CD4-positive, alpha-beta T cell (primary cell): ENCODE measurements at regions of chr4 and their contacts with region 1.

Region 1: DNA sequence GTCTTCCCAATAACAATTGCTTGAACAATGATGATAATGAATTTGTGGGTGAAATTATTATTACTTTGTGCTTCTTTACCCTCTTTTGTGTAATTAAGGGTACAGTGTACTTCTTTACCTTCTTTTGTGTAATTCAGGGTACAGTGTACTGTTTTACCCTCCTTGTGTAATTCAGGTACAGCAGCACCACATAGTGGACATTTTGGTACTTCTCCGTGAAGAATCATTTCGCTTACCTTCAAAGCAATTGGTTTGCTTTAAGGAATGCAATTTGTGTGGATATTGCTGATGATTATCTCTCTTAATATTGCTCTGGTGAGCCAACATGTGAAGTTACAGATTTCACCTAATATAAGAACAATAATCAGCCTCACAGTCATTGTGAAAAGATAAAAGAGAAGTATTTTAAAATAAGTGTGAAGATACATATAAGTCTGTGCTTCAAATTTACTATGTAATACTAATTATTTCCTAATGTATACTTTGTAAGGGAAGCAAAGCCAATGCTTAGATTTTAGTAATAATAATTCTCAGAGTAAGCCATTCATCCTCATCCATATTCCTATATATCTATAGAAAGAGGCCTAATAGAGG is 27.2 kb upstream of the SEC24B start:
- DNase-seq: peak in 7 of 14 experiments; percentile 3 to 72 (median 37)
- ATAC-seq: peak; percentile 65
- H3K4me3 ChIP-seq: no peak overlapping the region
- H3K4me3 Mint-ChIP-seq: no peak overlapping the region
- H3K27ac ChIP-seq: no peak overlapping the region
- H3K27ac Mint-ChIP-seq: no peak overlapping the region
- H3K4me1 ChIP-seq: no peaks in the 10 kb centered on the region
- H3K4me1 Mint-ChIP-seq: no peaks in the 10 kb centered on the region
- H3K27me3 ChIP-seq: peaks cover 0 to 2% of the 10 kb centered on the region in 2 experiments
- H3K27me3 Mint-ChIP-seq: peaks cover 4% of the 10 kb centered on the region
- CTCF ChIP-seq: peak; percentile 77

Region 2: DNA sequence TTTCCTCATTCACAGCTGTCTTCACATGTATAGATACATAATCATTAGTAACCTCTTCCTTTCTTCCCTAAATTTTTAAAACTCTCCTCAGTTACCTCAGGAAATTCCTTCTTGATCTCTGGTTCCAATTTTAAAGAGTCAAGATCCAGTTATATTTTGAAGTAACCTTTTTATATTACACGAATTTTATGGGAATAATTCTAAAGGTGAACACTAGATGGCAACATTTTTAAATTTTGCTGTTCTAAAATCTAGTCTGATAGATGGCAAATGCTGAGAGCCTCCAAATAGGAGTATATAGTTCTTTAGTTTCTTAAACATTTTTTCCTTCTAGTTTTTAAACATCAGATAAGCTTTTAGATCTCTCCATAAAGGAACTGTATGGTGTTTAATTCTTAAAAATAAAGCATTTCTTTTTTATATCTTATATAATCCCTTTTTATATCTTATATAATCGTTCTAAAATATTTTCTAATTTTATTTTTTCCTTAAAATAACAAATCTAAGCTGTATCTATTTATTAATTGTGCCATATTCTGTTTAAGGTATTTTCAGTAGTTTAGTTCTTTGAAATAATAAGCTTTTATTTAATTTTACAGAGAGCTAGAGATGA is 1648.5 kb before region 1 on chr4:
- CTCF ChIA-PET with region 1: no interaction called
- POLR2A ChIA-PET with region 1: no interaction called
- intact Hi-C with region 1: loop called in 1 of 2 experiments (anchors 5 kb)
- DNase-seq: peak in 3 of 14 experiments; percentile 25 to 42 (median 32)
- ATAC-seq: no peak
- H3K4me3 ChIP-seq: no peak overlapping the region
- H3K4me3 Mint-ChIP-seq: no peak overlapping the region
- H3K27ac ChIP-seq: no peak overlapping the region
- H3K27ac Mint-ChIP-seq: no peak overlapping the region
- H3K4me1 ChIP-seq: no peaks in the 10 kb centered on the region
- H3K4me1 Mint-ChIP-seq: no peaks in the 10 kb centered on the region
- H3K27me3 ChIP-seq: peaks cover 0 to 7% of the 10 kb centered on the region in 2 experiments
- H3K27me3 Mint-ChIP-seq: peaks cover 13% of the 10 kb centered on the region
- CTCF ChIP-seq: peak; percentile 80

Region 3: GRCh38 chr4:108683479-108683878 is 723.0 kb before region 1 on chr4:
- CTCF ChIA-PET with region 1: no interaction called
- POLR2A ChIA-PET with region 1: no interaction called
- intact Hi-C with region 1: loop called in 1 of 2 experiments (anchors 5 kb)
- DNase-seq: peak in 3 of 14 experiments; percentile 14 to 34 (median 20)
- ATAC-seq: no peak
- H3K4me3 ChIP-seq: no peak overlapping the region
- H3K4me3 Mint-ChIP-seq: no peak overlapping the region
- H3K27ac ChIP-seq: no peak overlapping the region
- H3K27ac Mint-ChIP-seq: no peak overlapping the region
- H3K4me1 ChIP-seq: no peaks in the 10 kb centered on the region
- H3K4me1 Mint-ChIP-seq: no peaks in the 10 kb centered on the region
- H3K27me3 ChIP-seq: no peaks in the 10 kb centered on the region
- H3K27me3 Mint-ChIP-seq: no peaks in the 10 kb centered on the region
- CTCF ChIP-seq: no peak

Region 4: GRCh38 chr4:108834835-108835384 is 571.5 kb before region 1 on chr4:
- CTCF ChIA-PET with region 1: no interaction called
- POLR2A ChIA-PET with region 1: no interaction called
- intact Hi-C with region 1: loop called in 1 of 2 experiments (anchors 2 kb)
- DNase-seq: peak in 3 of 14 experiments; percentile 10 to 18 (median 13)
- ATAC-seq: no peak
- H3K4me3 ChIP-seq: no peak overlapping the region
- H3K4me3 Mint-ChIP-seq: no peak overlapping the region
- H3K27ac ChIP-seq: no peak overlapping the region
- H3K27ac Mint-ChIP-seq: no peak overlapping the region
- H3K4me1 ChIP-seq: no peaks in the 10 kb centered on the region
- H3K4me1 Mint-ChIP-seq: no peaks in the 10 kb centered on the region
- H3K27me3 ChIP-seq: no peaks in the 10 kb centered on the region
- H3K27me3 Mint-ChIP-seq: peaks cover 10% of the 10 kb centered on the region
- CTCF ChIP-seq: peak; percentile 24

Region 5: GRCh38 chr4:110155654-110156053 is 749.2 kb after region 1 on chr4:
- CTCF ChIA-PET with region 1: no interaction called
- POLR2A ChIA-PET with region 1: no interaction called
- intact Hi-C with region 1: no loop called
- DNase-seq: no peak
- ATAC-seq: no peak
- H3K4me3 ChIP-seq: no peak overlapping the region
- H3K4me3 Mint-ChIP-seq: no peak overlapping the region
- H3K27ac ChIP-seq: no peak overlapping the region
- H3K27ac Mint-ChIP-seq: no peak overlapping the region
- H3K4me1 ChIP-seq: no peaks in the 10 kb centered on the region
- H3K4me1 Mint-ChIP-seq: no peaks in the 10 kb centered on the region
- H3K27me3 ChIP-seq: no peaks in the 10 kb centered on the region
- H3K27me3 Mint-ChIP-seq: no peaks in the 10 kb centered on the region
- CTCF ChIP-seq: no peak